ENCODE measurements at regions of chr1 and their contacts with region 1.

Region 1: GRCh38 chr1:229270547-229271447 is at the start of gene RAB4A:
- DNase-seq: peak; percentile 81
- H3K4me3 ChIP-seq: peak within 1 kb of the TSS; percentile 77 to 79
- H3K27ac ChIP-seq: peak within 1 kb of the TSS; percentile 84 to 90
- H3K4me1 ChIP-seq: peaks cover 18% of the 10 kb centered on the region
- H3K27me3 ChIP-seq: no peaks in the 10 kb centered on the region
- CTCF ChIP-seq: no peak
- POLR2A ChIP-seq: peak; percentile 87
- total RNA-seq, gene RAB4A: 53.6 to 106 TPM

Region 2: GRCh38 chr1:229341774-229342655 is 71.2 kb after region 1 on chr1:
- intact Hi-C with region 1: loop called (anchors 5 kb)
- DNase-seq: peak; percentile 89
- H3K4me3 ChIP-seq: peak overlapping the region; percentile 97 to 99
- H3K27ac ChIP-seq: peak overlapping the region; percentile 97 to 98
- H3K4me1 ChIP-seq: no peaks in the 10 kb centered on the region
- H3K27me3 ChIP-seq: no peaks in the 10 kb centered on the region
- CTCF ChIP-seq: no peak
- POLR2A ChIP-seq: peak; percentile 86